MCF 10A (cell line): ENCODE measurements at regions of chr11 and their contacts with region 1.

Region 1: GRCh38 chr11:59207988-59208451 is 4.7 kb downstream of the MPEG1 start:
- DNase-seq: peak; percentile 59
- H3K4me3 Mint-ChIP-seq: no peak overlapping the region
- H3K27ac Mint-ChIP-seq: no peak overlapping the region
- H3K4me1 Mint-ChIP-seq: peaks cover 11% of the 10 kb centered on the region
- H3K27me3 Mint-ChIP-seq: peaks cover 17% of the 10 kb centered on the region
- CTCF ChIP-seq: peak; percentile 62

Region 2: DNA sequence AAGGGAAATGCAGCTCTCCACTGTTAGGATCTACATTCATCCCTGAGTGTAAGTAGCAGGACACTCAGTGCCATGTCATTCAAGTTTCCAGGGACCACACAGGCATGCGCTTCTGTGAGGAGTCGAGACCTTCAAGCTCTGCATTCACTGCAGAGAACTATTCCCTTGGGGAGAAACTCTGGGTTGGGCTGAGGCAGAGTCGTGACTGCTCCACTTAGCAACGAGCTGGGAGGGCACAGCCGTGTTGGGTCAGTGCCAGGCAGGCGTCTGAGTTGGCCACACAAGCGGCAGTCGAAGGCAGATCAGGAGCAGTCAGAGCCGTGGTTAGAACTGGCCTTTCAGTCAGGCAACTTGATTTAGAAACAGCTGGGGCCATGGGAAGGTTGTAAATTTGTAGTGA is 10.0 kb before region 1 on chr11:
- CTCF ChIA-PET with region 1: interaction called, 530 read pairs
- POLR2A ChIA-PET with region 1: no interaction called
- intact Hi-C with region 1: no loop called
- DNase-seq: no peak
- H3K4me3 Mint-ChIP-seq: no peak overlapping the region
- H3K27ac Mint-ChIP-seq: peak overlapping the region; percentile 17
- H3K4me1 Mint-ChIP-seq: peaks cover 14% of the 10 kb centered on the region
- H3K27me3 Mint-ChIP-seq: no peaks in the 10 kb centered on the region
- CTCF ChIP-seq: no peak

Region 3: GRCh38 chr11:59224351-59224928 is 16.4 kb after region 1 on chr11:
- CTCF ChIA-PET with region 1: interaction called, 17 read pairs
- POLR2A ChIA-PET with region 1: no interaction called
- intact Hi-C with region 1: no loop called
- DNase-seq: no peak
- H3K4me3 Mint-ChIP-seq: no peak overlapping the region
- H3K27ac Mint-ChIP-seq: no peak overlapping the region
- H3K4me1 Mint-ChIP-seq: peaks cover 17% of the 10 kb centered on the region
- H3K27me3 Mint-ChIP-seq: no peaks in the 10 kb centered on the region
- CTCF ChIP-seq: no peak

Region 4: GRCh38 chr11:59283825-59284772 is 76.1 kb after region 1 on chr11:
- CTCF ChIA-PET with region 1: interaction called, 6 read pairs
- POLR2A ChIA-PET with region 1: no interaction called
- intact Hi-C with region 1: loop called (anchors 1 kb)
- DNase-seq: peak; percentile 67
- H3K4me3 Mint-ChIP-seq: no peak overlapping the region
- H3K27ac Mint-ChIP-seq: no peak overlapping the region
- H3K4me1 Mint-ChIP-seq: peaks cover 7% of the 10 kb centered on the region
- H3K27me3 Mint-ChIP-seq: peaks cover 44% of the 10 kb centered on the region
- CTCF ChIP-seq: peak; percentile 74

Region 5: GRCh38 chr11:59413646-59414045 is 205.6 kb after region 1 on chr11:
- CTCF ChIA-PET with region 1: no interaction called
- POLR2A ChIA-PET with region 1: no interaction called
- intact Hi-C with region 1: no loop called
- DNase-seq: no peak
- H3K4me3 Mint-ChIP-seq: no peak overlapping the region
- H3K27ac Mint-ChIP-seq: no peak overlapping the region
- H3K4me1 Mint-ChIP-seq: no peaks in the 10 kb centered on the region
- H3K27me3 Mint-ChIP-seq: peaks cover 19% of the 10 kb centered on the region
- CTCF ChIP-seq: no peak